BJ (cell line): ENCODE measurements at regions of chr20 and their contacts with region 1.

Region 1: DNA sequence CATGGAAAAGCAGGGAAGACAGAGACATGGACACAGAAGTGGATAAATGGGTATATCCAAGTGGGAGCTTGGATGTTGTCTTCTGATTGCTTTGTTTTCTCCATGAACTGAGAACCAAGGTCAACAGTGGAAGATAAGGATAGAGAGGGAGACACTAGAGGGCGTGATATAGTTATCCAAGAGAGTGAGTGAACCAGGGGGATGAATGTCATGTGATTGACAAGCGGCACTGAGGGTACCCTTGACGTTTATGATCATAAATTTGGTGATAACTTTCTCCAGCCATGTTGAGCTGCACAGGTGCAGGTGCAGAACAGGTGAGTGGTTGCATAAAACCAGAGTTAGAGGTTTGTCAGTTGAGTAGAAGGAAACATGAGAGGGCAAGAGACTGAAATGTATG is 20.7 kb downstream of the EBF4 start:
- DNase-seq: no peak
- H3K4me3 ChIP-seq: no peak overlapping the region
- H3K27me3 ChIP-seq: no peaks in the 10 kb centered on the region; the same call in 1 of the 2 replicates
- CTCF ChIP-seq: peak; percentile 33; the same call in 1 of the 2 replicates

Region 2: GRCh38 chr20:2849529-2849928 is 136.2 kb after region 1 on chr20:
- CTCF ChIA-PET with region 1: interaction called, 13 read pairs
- POLR2A ChIA-PET with region 1: interaction called, 3 read pairs
- DNase-seq: no peak
- H3K4me3 ChIP-seq: no peak overlapping the region
- H3K27me3 ChIP-seq: no peaks in the 10 kb centered on the region
- CTCF ChIP-seq: no peak